ENCODE measurements at regions of chr2 and their contacts with region 1.

Region 1: DNA sequence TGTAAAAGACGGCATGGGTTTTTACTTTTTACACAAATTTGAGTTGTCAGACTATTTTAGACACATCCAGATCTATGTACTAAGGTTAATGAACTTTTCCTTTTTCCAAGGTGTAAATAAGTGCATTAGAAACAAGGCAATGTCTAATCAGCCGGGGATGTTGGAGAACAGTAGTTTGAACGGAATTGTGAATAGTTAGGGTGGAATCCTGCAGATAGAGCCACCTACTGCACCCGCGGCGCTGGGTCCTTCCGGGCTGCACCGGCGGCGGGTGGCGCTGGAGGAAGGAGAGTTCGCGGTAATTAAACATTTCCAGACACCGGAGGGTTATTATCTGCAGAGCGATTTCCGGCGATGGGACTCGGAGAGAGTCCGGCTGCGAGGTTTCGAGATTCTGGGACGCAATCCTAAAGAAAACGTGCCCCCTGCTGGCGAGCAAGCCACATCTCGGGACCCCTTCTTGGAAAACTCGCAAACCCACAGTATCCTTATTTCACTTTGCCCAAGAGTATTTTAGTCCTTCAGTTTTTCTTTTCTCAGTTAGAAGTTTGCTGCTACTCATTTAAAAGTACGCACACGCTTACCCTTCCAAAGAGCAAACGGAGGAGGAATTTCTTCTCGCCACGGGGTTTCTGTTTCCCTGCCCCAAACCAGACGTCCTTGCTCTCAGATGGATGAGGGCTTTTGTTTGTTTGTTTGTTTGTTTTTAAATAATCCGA is 4.5 kb upstream of the OSR1 start:
- DNase-seq: peak; percentile 81
- H3K4me3 ChIP-seq: peak overlapping the region; percentile 41 to 44
- H3K27ac ChIP-seq: peak overlapping the region; percentile 51 to 54
- H3K4me1 ChIP-seq: no peaks in the 10 kb centered on the region
- H3K27me3 ChIP-seq: no peaks in the 10 kb centered on the region
- CTCF ChIP-seq: peak; percentile 78 to 93 (median 82)
- POLR2A ChIP-seq: no peak

Region 2: DNA sequence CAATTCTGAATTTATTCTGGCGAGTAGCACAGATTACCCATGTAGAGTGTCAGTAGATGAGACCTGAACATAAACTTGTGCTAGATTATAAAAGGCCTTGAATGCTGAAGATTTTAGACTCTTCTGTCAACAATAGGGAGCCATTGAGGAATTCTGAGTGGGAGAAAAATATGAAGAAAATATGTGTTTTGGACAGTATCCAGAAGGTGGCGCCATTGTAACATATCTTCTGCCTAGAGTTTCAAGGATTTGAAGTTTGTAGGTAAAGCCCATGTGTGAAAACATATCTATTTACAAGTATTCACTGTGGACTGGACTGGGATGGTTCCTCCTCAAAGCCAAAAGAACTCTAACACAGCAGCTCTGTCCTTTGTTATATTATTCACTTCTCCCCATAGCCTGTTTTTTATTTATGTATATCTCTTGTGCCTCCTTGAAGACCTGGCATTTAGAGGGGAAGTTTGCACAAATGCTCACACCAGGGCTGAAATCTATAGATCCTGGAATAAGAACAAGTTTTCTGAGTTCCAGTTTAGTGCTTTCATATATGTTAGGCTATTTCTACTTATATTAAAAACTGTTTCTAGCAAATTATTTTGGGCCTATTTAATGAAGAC is 927.4 kb before region 1 on chr2:
- intact Hi-C with region 1: loop called (anchors 2 kb)
- DNase-seq: peak; percentile 17
- H3K4me3 ChIP-seq: no peak overlapping the region
- H3K27ac ChIP-seq: no peak overlapping the region
- H3K4me1 ChIP-seq: no peaks in the 10 kb centered on the region
- H3K27me3 ChIP-seq: no peaks in the 10 kb centered on the region
- CTCF ChIP-seq: peak; percentile 40 to 65 (median 50)
- POLR2A ChIP-seq: no peak

Region 3: GRCh38 chr2:18889565-18890332 is 473.2 kb before region 1 on chr2:
- intact Hi-C with region 1: loop called (anchors 5 kb)
- DNase-seq: no peak
- H3K4me3 ChIP-seq: no peak overlapping the region
- H3K27ac ChIP-seq: no peak overlapping the region
- H3K4me1 ChIP-seq: no peaks in the 10 kb centered on the region
- H3K27me3 ChIP-seq: no peaks in the 10 kb centered on the region
- CTCF ChIP-seq: no peak
- POLR2A ChIP-seq: no peak

Region 4: GRCh38 chr2:19589791-19590190 is 226.9 kb after region 1 on chr2:
- intact Hi-C with region 1: no loop called
- DNase-seq: no peak
- H3K4me3 ChIP-seq: no peak overlapping the region
- H3K27ac ChIP-seq: no peak overlapping the region
- H3K4me1 ChIP-seq: no peaks in the 10 kb centered on the region
- H3K27me3 ChIP-seq: no peaks in the 10 kb centered on the region
- CTCF ChIP-seq: no peak
- POLR2A ChIP-seq: no peak

Region 5: DNA sequence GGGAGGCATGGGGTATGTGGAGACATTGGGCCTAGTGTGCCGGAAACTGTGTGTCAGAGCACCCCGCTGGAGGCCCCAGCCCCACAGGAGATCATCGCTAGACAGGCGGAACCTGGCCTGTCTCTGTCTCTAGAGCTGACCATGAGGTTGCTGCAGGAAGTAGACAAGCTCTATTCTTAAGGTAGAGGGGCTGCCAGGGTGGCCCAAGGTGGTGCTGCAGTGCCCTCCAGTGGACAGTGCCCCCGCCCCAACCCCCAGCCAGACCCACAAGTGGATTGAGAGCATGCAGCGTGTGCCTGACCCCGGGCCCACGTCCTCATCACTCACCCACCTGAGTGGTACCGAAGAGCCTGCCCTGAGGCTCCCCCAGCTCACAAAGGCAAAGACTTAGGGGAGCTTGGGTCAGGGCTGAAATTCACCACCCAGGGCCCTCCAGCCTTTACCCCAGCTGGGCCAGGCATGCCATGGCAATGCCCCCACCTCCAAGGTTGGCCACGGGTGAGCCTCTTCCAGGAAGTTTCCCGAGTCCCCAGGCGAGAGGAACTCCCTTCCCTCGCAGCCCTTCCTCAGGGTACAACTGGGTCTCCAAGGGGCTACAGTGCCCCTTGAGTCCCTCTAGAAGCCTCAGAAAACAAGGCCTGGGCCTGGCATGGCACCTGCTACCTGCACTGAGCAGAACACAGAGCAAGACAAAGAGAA is 383.8 kb after region 1 on chr2:
- intact Hi-C with region 1: loop called (anchors 10 kb)
- DNase-seq: no peak
- H3K4me3 ChIP-seq: no peak overlapping the region
- H3K27ac ChIP-seq: no peak overlapping the region
- H3K4me1 ChIP-seq: no peaks in the 10 kb centered on the region
- H3K27me3 ChIP-seq: no peaks in the 10 kb centered on the region
- CTCF ChIP-seq: peak in 1 of 4 experiments; percentile 11
- POLR2A ChIP-seq: no peak